AG04450 (cell line): ENCODE measurements at regions of chr3 and their contacts with region 1.

Region 1: DNA sequence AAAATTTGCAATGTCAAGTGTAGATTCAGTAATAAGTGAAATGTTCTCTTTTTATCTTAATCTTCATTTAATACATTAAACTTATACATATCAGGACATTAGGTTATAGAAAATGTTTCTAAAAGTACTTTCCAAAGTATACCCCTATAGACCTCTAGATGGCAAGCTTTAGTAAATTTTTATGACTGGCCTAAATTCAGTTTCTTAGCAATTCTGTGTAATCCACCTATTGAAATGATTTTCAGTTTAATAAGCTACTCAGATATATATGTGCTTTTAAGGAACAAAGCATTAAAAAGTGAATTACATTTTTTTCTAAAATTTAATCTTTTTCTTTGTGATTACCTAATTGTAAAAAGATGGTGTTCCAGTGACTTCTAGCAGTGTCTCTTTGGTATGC is 342.2 kb downstream of the GBE1 start:
- DNase-seq: no peak
- H3K4me3 ChIP-seq: no peak overlapping the region
- H3K27ac ChIP-seq: no peak overlapping the region
- H3K27me3 ChIP-seq: no peaks in the 10 kb centered on the region
- CTCF ChIP-seq: peak; percentile 60

Region 2: GRCh38 chr3:81394651-81395524 is 24.3 kb before region 1 on chr3:
- CTCF ChIA-PET with region 1: interaction called, 11 read pairs
- POLR2A ChIA-PET with region 1: no interaction called
- DNase-seq: no peak
- H3K4me3 ChIP-seq: no peak overlapping the region
- H3K27ac ChIP-seq: no peak overlapping the region
- H3K27me3 ChIP-seq: no peaks in the 10 kb centered on the region
- CTCF ChIP-seq: no peak

Region 3: GRCh38 chr3:81643721-81644120 is 224.5 kb after region 1 on chr3:
- CTCF ChIA-PET with region 1: interaction called, 32 read pairs
- POLR2A ChIA-PET with region 1: no interaction called
- DNase-seq: no peak
- H3K4me3 ChIP-seq: no peak overlapping the region
- H3K27ac ChIP-seq: no peak overlapping the region
- H3K27me3 ChIP-seq: no peaks in the 10 kb centered on the region
- CTCF ChIP-seq: peak; percentile 47